ENCODE measurements at regions of chr7 and their contacts with region 1.

Region 1: GRCh38 chr7:22743014-22743413 is 16.0 kb downstream of the IL6 start:
- DNase-seq: no peak
- H3K4me3 ChIP-seq: no peak overlapping the region
- H3K27ac ChIP-seq: no peak overlapping the region
- H3K4me1 ChIP-seq: no peaks in the 10 kb centered on the region
- H3K27me3 ChIP-seq: no peaks in the 10 kb centered on the region
- CTCF ChIP-seq: no peak

Region 2: DNA sequence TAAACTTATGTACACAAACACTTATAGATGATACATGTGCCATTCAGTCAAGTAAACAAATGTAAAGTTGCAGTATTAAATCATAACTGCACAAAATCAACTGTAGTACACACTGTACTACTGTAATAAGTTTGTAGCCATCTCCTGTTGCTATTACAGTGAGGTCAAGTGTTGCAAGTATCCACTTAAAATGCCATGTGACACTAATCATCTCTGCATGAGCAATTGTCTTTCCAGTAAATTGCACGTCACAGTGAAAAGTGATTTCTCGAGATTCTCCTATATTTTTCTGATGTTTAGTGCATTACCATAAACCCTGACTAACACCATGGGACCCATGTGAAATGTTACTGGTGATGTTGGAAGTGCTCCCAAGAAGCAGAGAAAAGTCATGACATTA is 1608.4 kb before region 1 on chr7:
- intact Hi-C with region 1: loop called (anchors 10 kb)
- DNase-seq: no peak
- H3K4me3 ChIP-seq: no peak overlapping the region
- H3K27ac ChIP-seq: no peak overlapping the region
- H3K4me1 ChIP-seq: no peaks in the 10 kb centered on the region
- H3K27me3 ChIP-seq: no peaks in the 10 kb centered on the region
- CTCF ChIP-seq: no peak

Region 3: DNA sequence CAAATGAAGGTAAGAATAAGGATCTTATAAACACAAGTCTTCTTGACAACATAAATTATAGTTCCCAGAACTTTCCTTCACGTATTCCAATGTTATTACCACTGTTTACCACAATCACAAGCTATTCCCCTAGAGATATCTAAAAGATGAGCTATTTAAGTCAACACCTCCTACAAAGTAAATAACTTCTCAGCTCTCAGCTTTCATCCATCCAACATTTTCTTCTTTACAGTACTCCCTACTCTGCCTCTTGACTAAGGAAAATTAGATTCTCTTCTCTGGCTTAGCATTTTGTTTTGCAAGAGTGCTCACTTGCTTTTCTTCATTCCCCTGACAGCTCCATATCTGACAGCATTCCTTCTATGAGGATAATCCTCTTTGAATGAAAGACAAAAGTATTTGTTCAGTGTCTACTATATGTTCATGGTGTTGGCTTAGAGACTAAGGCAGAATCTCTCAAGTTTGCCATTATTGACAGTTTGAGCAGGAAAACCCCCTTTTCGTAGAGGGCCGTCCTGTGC is 109.0 kb before region 1 on chr7:
- intact Hi-C with region 1: no loop called
- DNase-seq: no peak
- H3K4me3 ChIP-seq: no peak overlapping the region
- H3K27ac ChIP-seq: no peak overlapping the region
- H3K4me1 ChIP-seq: peaks cover 0 to 23% (median 2%) of the 10 kb centered on the region in 4 donors
- H3K27me3 ChIP-seq: no peaks in the 10 kb centered on the region
- CTCF ChIP-seq: no peak

Measured in tibial artery (tissue), 4 donors.